PC-9 (cell line): ENCODE measurements at regions of chr5 and their contacts with region 1.

Region 1: GRCh38 chr5:176959051-176959450 is 47.5 kb downstream of the UIMC1 start:
- DNase-seq: peak in 1 of 2 experiments; percentile 54
- H3K4me3 ChIP-seq: no peak overlapping the region
- H3K27ac ChIP-seq: no peak overlapping the region
- H3K4me1 ChIP-seq: no peaks in the 10 kb centered on the region
- H3K27me3 ChIP-seq: no peaks in the 10 kb centered on the region
- CTCF ChIP-seq: peak; percentile 74

Region 2: DNA sequence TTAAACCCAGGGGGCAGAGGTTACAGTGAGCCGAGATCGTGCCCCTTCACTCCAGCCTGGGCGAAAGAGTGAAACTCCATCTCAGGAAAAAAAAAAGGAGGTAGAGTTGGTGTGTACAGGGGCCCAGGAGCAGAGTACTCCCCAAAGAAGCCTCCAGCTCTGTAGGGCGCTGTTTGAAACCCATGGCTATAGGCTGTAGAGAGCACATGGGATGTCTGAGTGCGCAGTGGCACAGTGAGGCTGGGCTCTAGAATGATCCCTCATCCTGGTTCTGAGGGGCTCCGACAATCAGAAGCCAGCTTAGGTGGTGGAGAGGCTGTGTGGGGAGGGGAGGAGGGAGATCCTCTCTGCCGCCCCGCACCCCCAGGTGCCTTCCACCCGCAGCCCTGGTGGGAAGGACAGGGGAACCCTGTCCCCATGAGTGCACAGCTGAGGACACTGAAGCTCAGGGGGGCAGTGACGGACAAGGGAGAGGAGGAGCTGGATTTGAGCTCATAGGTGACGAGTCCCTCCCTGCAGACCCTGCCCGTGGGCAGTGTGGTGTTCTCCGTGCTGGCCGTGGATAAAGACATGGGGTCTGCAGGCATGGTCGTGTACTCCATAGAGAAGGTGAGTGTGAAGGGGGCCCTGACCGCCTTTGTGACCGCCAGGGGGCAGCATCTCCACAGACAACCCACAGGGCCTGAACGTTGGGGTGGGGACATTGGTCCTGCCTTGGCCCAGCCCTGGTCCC is 385.3 kb before region 1 on chr5:
- CTCF ChIA-PET with region 1: no interaction called
- POLR2A ChIA-PET with region 1: no interaction called
- intact Hi-C with region 1: loop called (anchors 5 kb)
- DNase-seq: peak in 1 of 2 experiments; percentile 62
- H3K4me3 ChIP-seq: no peak overlapping the region
- H3K27ac ChIP-seq: no peak overlapping the region
- H3K4me1 ChIP-seq: 0 out of 2 replicates have a peak, but pooled peaks cover 4% of the 10 kb centered on the region
- H3K27me3 ChIP-seq: no peaks in the 10 kb centered on the region
- CTCF ChIP-seq: peak; percentile 90

Region 3: GRCh38 chr5:176812269-176813259 is 146.5 kb before region 1 on chr5:
- CTCF ChIA-PET with region 1: no interaction called
- POLR2A ChIA-PET with region 1: no interaction called
- intact Hi-C with region 1: loop called (anchors 2 kb)
- DNase-seq: peak in 1 of 2 experiments; percentile 75
- H3K4me3 ChIP-seq: no peak overlapping the region
- H3K27ac ChIP-seq: no peak overlapping the region
- H3K4me1 ChIP-seq: peaks cover 13% of the 10 kb centered on the region
- H3K27me3 ChIP-seq: peaks cover 4% of the 10 kb centered on the region
- CTCF ChIP-seq: peak; percentile 76

Region 4: GRCh38 chr5:176870110-176870593 is 88.9 kb before region 1 on chr5:
- CTCF ChIA-PET with region 1: no interaction called
- POLR2A ChIA-PET with region 1: no interaction called
- intact Hi-C with region 1: no loop called
- DNase-seq: peak in 1 of 2 experiments; percentile 27
- H3K4me3 ChIP-seq: no peak overlapping the region
- H3K27ac ChIP-seq: no peak overlapping the region
- H3K4me1 ChIP-seq: no peaks in the 10 kb centered on the region
- H3K27me3 ChIP-seq: no peaks in the 10 kb centered on the region
- CTCF ChIP-seq: 0 out of 2 replicates have a peak, but pooled peaks have one; percentile 36